MCF 10A (cell line): ENCODE measurements at regions of chr2 and their contacts with region 1.

Region 1: GRCh38 chr2:18149645-18150246 is 271.3 kb downstream of the KCNS3 start:
- DNase-seq: peak; percentile 57
- H3K4me3 Mint-ChIP-seq: no peak overlapping the region
- H3K27ac Mint-ChIP-seq: no peak overlapping the region
- H3K4me1 Mint-ChIP-seq: no peaks in the 10 kb centered on the region
- H3K27me3 Mint-ChIP-seq: peaks cover 8% of the 10 kb centered on the region
- CTCF ChIP-seq: peak; percentile 57

Region 2: DNA sequence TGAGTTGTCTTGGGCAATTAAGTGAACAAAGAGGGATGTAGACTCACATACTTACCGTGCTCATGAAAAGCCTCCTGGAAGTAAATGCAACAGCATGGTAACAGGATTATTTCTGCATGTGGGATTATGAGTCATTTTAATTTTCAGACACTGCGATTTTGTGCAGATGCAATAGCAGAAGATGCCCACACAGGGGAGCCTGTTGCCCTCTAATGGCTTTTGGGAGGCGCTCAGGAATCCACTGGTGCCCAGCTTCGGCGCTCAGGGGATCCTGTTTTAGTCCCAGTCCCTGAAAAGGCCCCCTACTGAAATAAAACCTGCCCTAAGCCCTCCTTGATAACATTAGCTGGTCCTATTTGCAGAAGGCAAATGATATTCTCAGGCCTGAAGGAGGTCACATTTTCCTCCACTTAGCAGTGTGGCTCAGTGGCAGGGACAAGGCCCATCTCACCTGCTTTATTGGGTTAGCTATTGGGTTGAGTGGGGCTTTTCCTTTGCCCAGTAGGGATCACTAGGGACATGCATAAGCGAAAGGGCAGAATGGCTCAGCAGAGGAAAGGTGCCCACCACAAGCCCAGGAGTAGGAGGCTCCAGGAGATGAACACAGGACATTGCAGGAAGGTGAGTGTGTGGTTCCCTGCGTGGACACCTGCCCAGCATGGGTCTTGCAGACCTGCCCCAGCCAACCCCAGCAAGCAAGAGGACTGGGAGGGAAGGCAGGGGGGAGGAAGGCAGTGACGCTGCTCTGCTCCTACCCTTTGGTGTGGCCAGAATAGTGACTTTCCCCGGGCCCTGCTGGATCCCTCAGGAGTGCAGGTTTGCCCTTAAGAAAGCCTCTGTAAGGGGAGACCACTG is 297.8 kb before region 1 on chr2:
- CTCF ChIA-PET with region 1: interaction called, 69 read pairs
- POLR2A ChIA-PET with region 1: no interaction called
- intact Hi-C with region 1: loop called (anchors 1 kb)
- DNase-seq: peak; percentile 79
- H3K4me3 Mint-ChIP-seq: no peak overlapping the region
- H3K27ac Mint-ChIP-seq: peak overlapping the region; percentile 66
- H3K4me1 Mint-ChIP-seq: peaks cover 10% of the 10 kb centered on the region
- H3K27me3 Mint-ChIP-seq: peaks cover 32% of the 10 kb centered on the region
- CTCF ChIP-seq: peak; percentile 98

Region 3: GRCh38 chr2:18129348-18129747 is 20.4 kb before region 1 on chr2:
- CTCF ChIA-PET with region 1: interaction called, 14 read pairs
- POLR2A ChIA-PET with region 1: no interaction called
- intact Hi-C with region 1: no loop called
- DNase-seq: no peak
- H3K4me3 Mint-ChIP-seq: no peak overlapping the region
- H3K27ac Mint-ChIP-seq: no peak overlapping the region
- H3K4me1 Mint-ChIP-seq: no peaks in the 10 kb centered on the region
- H3K27me3 Mint-ChIP-seq: peaks cover 19% of the 10 kb centered on the region
- CTCF ChIP-seq: no peak

Region 4: GRCh38 chr2:18159896-18160295 is 10.2 kb after region 1 on chr2:
- CTCF ChIA-PET with region 1: interaction called, 20 read pairs
- POLR2A ChIA-PET with region 1: no interaction called
- intact Hi-C with region 1: no loop called
- DNase-seq: no peak
- H3K4me3 Mint-ChIP-seq: no peak overlapping the region
- H3K27ac Mint-ChIP-seq: no peak overlapping the region
- H3K4me1 Mint-ChIP-seq: no peaks in the 10 kb centered on the region
- H3K27me3 Mint-ChIP-seq: peaks cover 13% of the 10 kb centered on the region
- CTCF ChIP-seq: no peak

Region 5: DNA sequence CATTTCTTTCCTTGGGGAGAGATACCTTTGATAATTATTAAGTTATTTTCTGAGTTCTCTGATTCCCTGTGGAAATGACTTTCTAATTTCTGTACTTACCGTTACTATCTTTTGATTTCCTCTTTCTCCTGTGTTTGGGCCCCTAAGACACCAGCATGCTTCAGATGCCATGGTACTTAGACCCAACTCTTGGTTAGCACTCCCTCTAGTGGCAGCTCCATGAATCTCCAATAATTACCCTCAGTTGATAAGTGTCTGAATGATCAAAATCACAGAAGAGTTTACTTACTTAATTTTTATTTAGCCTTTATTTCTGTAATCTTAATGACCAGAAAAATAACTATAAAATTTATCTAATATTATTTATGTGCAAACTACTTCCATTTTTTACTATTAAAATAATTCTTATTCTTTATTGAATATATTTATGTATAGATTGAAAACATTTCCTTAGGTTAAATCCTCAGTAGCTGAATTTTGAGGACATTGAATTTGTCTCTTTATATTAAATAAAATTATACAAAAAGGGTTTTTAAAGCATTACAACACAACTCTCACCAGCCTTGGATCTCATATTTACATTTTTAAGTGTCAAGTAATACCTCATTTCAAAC is 29.1 kb after region 1 on chr2:
- CTCF ChIA-PET with region 1: interaction called, 15 read pairs
- POLR2A ChIA-PET with region 1: interaction called, 3 read pairs
- intact Hi-C with region 1: no loop called
- DNase-seq: peak; percentile 74
- H3K4me3 Mint-ChIP-seq: no peak overlapping the region
- H3K27ac Mint-ChIP-seq: no peak overlapping the region
- H3K4me1 Mint-ChIP-seq: no peaks in the 10 kb centered on the region
- H3K27me3 Mint-ChIP-seq: peaks cover 11% of the 10 kb centered on the region
- CTCF ChIP-seq: peak; percentile 77

Region 6: DNA sequence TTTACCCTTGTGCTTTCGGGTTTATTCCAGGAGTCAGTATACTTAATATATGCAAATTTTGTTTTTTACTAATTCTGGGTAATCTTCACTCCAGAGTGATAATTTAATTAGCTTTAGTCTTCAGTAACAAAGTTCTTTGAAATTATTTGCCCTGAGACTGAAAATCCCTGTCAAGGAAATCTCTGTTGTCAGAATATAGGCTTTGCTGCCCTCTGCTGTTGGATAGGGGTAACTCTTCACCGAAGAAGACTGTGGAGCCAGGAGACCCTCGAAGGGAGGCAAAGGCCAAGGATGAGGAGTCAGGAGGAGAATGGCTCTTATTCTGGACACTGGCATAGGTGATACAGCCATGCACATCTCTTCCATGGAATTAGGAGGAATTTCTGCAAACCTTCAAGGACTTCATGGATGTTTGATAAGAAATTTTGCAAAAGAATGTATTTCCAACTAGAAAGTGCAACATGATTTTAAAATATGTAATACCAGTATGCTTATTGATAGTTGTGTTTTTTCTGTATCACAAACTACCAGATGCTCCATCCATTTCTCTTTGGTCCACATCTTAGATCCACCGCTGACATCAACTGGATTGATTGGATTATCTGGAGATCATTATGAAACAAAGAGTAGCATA is 228.4 kb after region 1 on chr2:
- CTCF ChIA-PET with region 1: interaction called, 14 read pairs
- POLR2A ChIA-PET with region 1: no interaction called
- intact Hi-C with region 1: loop called (anchors 1 kb)
- DNase-seq: peak; percentile 66
- H3K4me3 Mint-ChIP-seq: no peak overlapping the region
- H3K27ac Mint-ChIP-seq: no peak overlapping the region
- H3K4me1 Mint-ChIP-seq: peaks cover 6% of the 10 kb centered on the region
- H3K27me3 Mint-ChIP-seq: peaks cover 13% of the 10 kb centered on the region
- CTCF ChIP-seq: peak; percentile 82